ENCODE measurements at regions of chrX and their contacts with region 1.

Region 1: DNA sequence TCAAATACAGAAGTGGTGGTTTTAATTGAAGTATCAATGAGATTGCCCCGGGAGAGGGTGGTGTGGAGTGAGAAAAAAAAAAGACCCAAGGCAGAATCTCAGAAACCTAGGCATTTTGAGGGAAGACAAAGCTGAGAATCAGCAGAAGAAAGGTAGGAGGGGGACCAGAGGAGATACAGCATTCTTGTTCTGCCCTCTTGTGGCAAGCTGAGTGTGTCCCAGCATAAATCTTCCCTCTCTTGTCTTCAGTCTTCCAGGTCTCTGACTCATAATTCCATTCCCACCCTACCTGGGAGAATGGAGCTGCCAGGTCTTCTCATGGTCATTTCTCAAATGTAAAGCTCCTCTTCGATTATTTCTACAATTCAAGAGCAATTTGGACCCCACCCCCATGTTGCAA is 32.7 kb upstream of the MAGED1 start:
- DNase-seq: peak; percentile 52
- H3K4me3 ChIP-seq: no peak overlapping the region
- H3K27ac ChIP-seq: no peak overlapping the region
- H3K4me1 ChIP-seq: no peaks in the 10 kb centered on the region
- H3K27me3 ChIP-seq: no peaks in the 10 kb centered on the region

Region 2: DNA sequence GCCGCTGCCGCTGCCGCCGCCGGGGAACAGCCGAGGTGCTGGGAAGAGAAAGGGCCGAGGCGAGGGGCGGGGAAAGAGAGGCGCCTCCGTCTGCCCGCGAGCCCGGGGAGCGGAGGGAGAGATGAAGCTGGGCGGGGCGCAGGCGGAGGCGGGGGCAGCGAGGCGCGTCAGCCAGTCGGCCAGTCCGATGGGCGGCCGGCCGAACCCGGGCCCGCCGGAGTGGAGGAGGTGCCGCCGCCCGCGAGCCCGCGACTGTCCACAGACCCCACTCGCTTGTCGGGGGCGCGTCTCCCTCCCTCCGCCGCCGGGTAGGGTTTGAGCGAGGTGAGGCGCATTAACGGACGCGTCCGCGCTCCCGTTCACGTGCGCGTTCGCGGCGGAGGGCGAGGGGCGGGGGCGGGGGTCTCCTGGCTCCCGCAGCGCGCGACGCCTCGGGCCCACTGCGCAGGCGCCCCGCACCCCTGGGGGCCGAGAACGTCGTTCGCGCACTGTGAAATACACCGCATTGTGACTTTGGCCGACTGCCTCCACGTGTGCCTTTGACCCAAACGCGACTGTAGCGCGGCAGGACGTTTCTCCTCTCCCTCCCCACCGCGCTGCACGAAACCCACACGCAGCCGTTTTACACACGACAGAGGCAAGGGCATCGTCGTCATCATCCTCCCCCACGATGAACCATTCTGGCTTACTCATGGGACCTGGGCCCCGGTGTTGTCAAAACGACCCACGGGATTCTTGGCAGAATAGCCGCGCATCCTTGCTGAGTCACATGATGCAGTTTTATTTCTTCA is 364.0 kb before region 1 on chrX and contains the start of gene NUDT11:
- in situ Hi-C with region 1: loop called (anchors 25 kb)
- DNase-seq: peak; percentile 88
- H3K4me3 ChIP-seq: peak within 1 kb of the TSS; percentile 75
- H3K27ac ChIP-seq: peak within 1 kb of the TSS; percentile 41
- H3K4me1 ChIP-seq: 0 out of 2 replicates have a peak, but pooled peaks cover 6% of the 10 kb centered on the region
- H3K27me3 ChIP-seq: no peaks in the 10 kb centered on the region
- total RNA-seq, gene NUDT11: 12.0 and 12.4 TPM in 2 replicates

Region 3: GRCh38 chrX:51665981-51666380 is 194.7 kb before region 1 on chrX:
- in situ Hi-C with region 1: loop called (anchors 25 kb)
- DNase-seq: no peak
- H3K4me3 ChIP-seq: no peak overlapping the region
- H3K27ac ChIP-seq: no peak overlapping the region
- H3K4me1 ChIP-seq: no peaks in the 10 kb centered on the region
- H3K27me3 ChIP-seq: no peaks in the 10 kb centered on the region

Region 4: GRCh38 chrX:51737091-51737490 is 123.6 kb before region 1 on chrX:
- in situ Hi-C with region 1: no loop called
- DNase-seq: no peak
- H3K4me3 ChIP-seq: no peak overlapping the region
- H3K27ac ChIP-seq: no peak overlapping the region
- H3K4me1 ChIP-seq: no peaks in the 10 kb centered on the region
- H3K27me3 ChIP-seq: no peaks in the 10 kb centered on the region

Measured in GM23248 (cell line).